T-cell (primary cell): ENCODE measurements at regions of chr6 and their contacts with region 1.

Region 1: DNA sequence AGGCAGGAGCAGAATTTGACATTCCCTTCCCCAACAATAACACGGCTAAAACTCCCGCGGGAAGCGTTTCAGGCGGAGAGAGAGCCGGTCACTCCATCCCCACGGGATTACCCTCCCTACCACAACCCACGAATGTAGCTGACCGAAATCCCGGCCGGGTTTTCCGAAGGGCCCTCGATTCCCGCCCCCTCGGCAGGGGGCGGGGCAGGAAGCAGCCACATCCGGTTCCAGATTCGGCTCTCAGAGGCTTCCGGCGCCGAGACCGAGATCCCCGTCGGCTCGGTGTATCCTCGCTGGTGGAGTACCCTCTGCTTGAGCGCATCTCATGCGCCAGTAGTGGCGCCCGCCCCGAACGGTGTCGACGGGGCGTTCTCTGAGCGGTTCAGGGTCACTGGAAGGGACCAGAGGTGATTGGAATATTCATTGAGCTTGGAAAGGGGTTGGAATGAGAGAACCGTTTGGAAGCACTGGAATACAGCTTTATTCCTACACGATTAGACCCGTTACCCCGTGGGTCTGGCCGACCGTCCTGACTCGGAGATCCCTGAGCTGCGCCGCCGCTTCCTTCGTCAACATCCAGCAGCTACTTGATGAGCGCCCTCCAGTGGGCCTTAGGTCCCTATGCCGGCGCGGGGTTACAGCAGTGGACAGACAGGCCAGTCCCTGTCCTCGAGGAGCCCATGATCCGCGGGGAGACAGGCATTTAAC is 649 bp upstream of the RGL2 start:
- DNase-seq: peak; percentile 88 to 95 (median 93)
- ATAC-seq: peak; percentile 82 to 84 (median 84)
- H3K4me3 ChIP-seq: peak overlapping the region; percentile 89 to 91
- H3K4me3 Mint-ChIP-seq: peak overlapping the region; percentile 95 to 99 (median 99)
- H3K27ac ChIP-seq: peak overlapping the region; percentile 88
- H3K27ac Mint-ChIP-seq: peak overlapping the region; percentile 99 to 100
- H3K4me1 ChIP-seq: peaks cover 7 to 39% of the 10 kb centered on the region in 2 experiments
- H3K4me1 Mint-ChIP-seq: peaks cover 34 to 59% (median 42%) of the 10 kb centered on the region in 3 donors
- H3K27me3 ChIP-seq: no peaks in the 10 kb centered on the region
- H3K27me3 Mint-ChIP-seq: no peaks in the 10 kb centered on the region

Region 2: GRCh38 chr6:33198159-33198852 is 101.1 kb before region 1 on chr6:
- CTCF ChIA-PET with region 1: interaction called in 1 of 2 experiments, 10 read pairs
- POLR2A ChIA-PET with region 1: no interaction called
- DNase-seq: no peak
- ATAC-seq: no peak
- H3K4me3 ChIP-seq: no peak overlapping the region
- H3K4me3 Mint-ChIP-seq: peak overlapping the region; percentile 76 to 97 (median 77)
- H3K27ac ChIP-seq: no peak overlapping the region
- H3K27ac Mint-ChIP-seq: peak overlapping the region; percentile 89 to 91
- H3K4me1 ChIP-seq: peaks cover 13 to 44% of the 10 kb centered on the region in 2 experiments
- H3K4me1 Mint-ChIP-seq: peaks cover 56 to 61% (median 57%) of the 10 kb centered on the region in 3 donors
- H3K27me3 ChIP-seq: no peaks in the 10 kb centered on the region
- H3K27me3 Mint-ChIP-seq: no peaks in the 10 kb centered on the region

Region 3: GRCh38 chr6:33215271-33216116 is 83.9 kb before region 1 on chr6:
- CTCF ChIA-PET with region 1: no interaction called
- POLR2A ChIA-PET with region 1: interaction called in 1 of 2 experiments, 12 read pairs
- DNase-seq: no peak
- ATAC-seq: peak in 2 of 4 experiments; percentile 11 to 23
- H3K4me3 ChIP-seq: no peak overlapping the region
- H3K4me3 Mint-ChIP-seq: peak overlapping the region in 1 of 3 donors; percentile 85
- H3K27ac ChIP-seq: no peak overlapping the region
- H3K27ac Mint-ChIP-seq: peak overlapping the region in 1 of 2 donors; percentile 74
- H3K4me1 ChIP-seq: peaks cover 2 to 29% of the 10 kb centered on the region in 2 experiments
- H3K4me1 Mint-ChIP-seq: peaks cover 19 to 26% (median 22%) of the 10 kb centered on the region in 3 donors
- H3K27me3 ChIP-seq: peaks cover 2 to 66% of the 10 kb centered on the region in 2 experiments
- H3K27me3 Mint-ChIP-seq: peaks cover 23 to 50% of the 10 kb centered on the region in 2 donors

Region 4: DNA sequence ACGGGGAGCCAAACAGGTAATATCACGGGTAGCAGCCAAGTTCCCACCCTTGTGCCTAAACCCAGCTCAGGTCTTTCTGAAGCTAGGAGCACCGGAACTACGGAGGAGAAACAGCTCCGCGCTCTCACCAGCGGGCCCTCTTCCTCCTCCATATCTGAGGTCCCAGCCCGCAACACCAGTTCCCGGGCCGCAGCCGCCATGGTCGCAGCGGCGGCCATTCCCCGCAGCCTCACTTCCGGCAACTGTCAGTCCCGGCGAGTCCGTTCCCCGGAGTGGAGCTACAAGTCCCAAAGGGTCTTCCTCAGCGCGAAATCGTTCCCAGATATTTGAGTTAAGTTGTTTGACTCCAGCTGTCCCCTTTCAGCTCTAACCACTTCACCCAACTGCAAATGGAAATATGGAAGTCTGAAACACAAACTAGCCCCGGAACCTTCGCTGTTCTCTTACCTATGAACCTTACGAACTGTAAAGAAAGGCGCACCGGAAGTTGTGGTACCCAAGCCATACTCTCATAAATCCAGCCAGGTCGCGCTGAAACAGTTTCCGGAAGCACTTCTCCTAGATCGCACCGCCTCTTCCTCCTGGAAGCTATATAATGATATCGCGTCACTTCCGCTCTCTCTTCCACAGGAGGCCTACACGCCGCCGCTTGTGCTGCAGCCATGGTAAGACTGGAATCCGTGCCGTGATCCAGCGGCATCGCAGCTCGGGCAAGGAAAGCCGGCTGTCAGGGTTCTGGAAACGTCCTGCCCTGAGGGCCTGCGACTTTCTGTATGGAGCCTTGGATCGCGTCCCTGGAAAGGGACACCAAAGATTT is 27.7 kb before region 1 on chr6 and contains the starts of genes RPS18 and VPS52:
- CTCF ChIA-PET with region 1: interaction called, 6 to 11 read pairs
- POLR2A ChIA-PET with region 1: interaction called, 4 to 6 read pairs
- DNase-seq: peak; percentile 79 to 99 (median 92)
- ATAC-seq: peak; percentile 82 to 93 (median 90)
- H3K4me3 ChIP-seq: peak within 1 kb of the TSS; percentile 70 to 73
- H3K4me3 Mint-ChIP-seq: peak within 1 kb of the TSS; percentile 92 to 98 (median 94)
- H3K27ac ChIP-seq: peak within 1 kb of the TSS; percentile 85
- H3K27ac Mint-ChIP-seq: peak within 1 kb of the TSS; percentile 98 to 99
- H3K4me1 ChIP-seq: peaks cover 37 to 59% of the 10 kb centered on the region in 2 experiments
- H3K4me1 Mint-ChIP-seq: peaks cover 55 to 68% (median 60%) of the 10 kb centered on the region in 3 donors
- H3K27me3 ChIP-seq: no peaks in the 10 kb centered on the region
- H3K27me3 Mint-ChIP-seq: no peaks in the 10 kb centered on the region
- total RNA-seq, gene RPS18: 3,249 to 4,871 (median 4,590) TPM
- total RNA-seq, gene VPS52: 81.4 to 100 (median 87.6) TPM

Region 5: DNA sequence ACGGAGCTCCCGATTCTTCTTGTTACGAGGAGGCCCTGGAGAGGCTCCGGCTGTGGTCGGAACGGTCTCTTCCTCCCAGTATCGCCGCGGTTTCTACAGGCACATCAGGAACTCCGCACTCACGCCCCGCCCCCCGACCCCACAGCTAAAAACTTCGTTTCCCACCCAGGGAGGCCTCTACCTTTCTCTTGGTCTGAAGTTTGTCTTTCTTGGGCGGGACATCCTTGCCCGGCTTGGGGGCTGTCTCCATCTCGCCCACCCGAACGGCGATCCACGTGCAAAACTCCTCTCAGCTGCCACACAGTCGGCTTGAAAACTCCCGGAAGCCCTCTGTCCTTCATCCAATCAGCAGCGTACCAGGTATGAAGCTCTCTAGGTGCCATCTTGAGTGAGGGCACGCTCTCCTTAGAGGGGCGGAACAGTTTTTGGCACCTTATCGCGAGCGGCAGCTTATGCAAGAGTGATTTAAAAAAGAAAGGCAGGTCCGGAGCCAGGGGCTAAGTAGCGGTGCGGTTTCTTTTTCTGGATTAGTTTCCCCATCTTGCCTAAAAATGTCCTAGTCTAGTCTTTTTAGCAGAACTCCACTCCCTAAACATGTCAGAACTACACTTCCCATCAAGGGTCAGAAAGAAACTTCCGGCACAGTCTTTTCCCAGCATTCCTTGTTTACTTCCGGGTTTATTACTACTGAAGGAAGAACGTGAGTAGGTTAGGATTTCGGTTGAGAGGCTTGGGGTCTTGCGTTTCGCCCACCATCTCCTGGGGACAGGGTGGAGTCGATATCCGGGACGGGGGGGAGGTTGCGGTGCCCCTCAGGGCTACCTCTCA is 10.3 kb before region 1 on chr6 and contains the starts of genes PFDN6 and WDR46:
- CTCF ChIA-PET with region 1: interaction called, 3 to 10 read pairs
- POLR2A ChIA-PET with region 1: interaction called, 3 to 6 read pairs
- DNase-seq: peak; percentile 67 to 90 (median 82)
- ATAC-seq: peak; percentile 95 to 96 (median 96)
- H3K4me3 ChIP-seq: peak within 1 kb of the TSS; percentile 82 to 97
- H3K4me3 Mint-ChIP-seq: peak within 1 kb of the TSS; percentile 93 to 96 (median 96)
- H3K27ac ChIP-seq: peak within 1 kb of the TSS; percentile 65
- H3K27ac Mint-ChIP-seq: peak within 1 kb of the TSS; percentile 92 to 96
- H3K4me1 ChIP-seq: peaks cover 13 to 33% of the 10 kb centered on the region in 2 experiments
- H3K4me1 Mint-ChIP-seq: peaks cover 44 to 50% (median 49%) of the 10 kb centered on the region in 3 donors
- H3K27me3 ChIP-seq: no peaks in the 10 kb centered on the region
- H3K27me3 Mint-ChIP-seq: no peaks in the 10 kb centered on the region
- total RNA-seq, gene PFDN6: 16.1 to 51.4 (median 40.5) TPM
- total RNA-seq, gene WDR46: 38.3 to 74.4 (median 60.4) TPM